ENCODE measurements at regions of chr19 and their contacts with region 1.

Region 1: GRCh38 chr19:44002566-44003460 is at the start of gene ZNF230:
- DNase-seq: peak; percentile 90
- H3K4me3 Mint-ChIP-seq: peak within 1 kb of the TSS; percentile 87
- H3K27ac Mint-ChIP-seq: peak within 1 kb of the TSS; percentile 77
- H3K4me1 Mint-ChIP-seq: peaks cover 8% of the 10 kb centered on the region
- H3K27me3 Mint-ChIP-seq: no peaks in the 10 kb centered on the region
- CTCF ChIP-seq: no peak
- total RNA-seq, gene ZNF230: 6.0 and 7.8 TPM in 2 replicates

Region 2: DNA sequence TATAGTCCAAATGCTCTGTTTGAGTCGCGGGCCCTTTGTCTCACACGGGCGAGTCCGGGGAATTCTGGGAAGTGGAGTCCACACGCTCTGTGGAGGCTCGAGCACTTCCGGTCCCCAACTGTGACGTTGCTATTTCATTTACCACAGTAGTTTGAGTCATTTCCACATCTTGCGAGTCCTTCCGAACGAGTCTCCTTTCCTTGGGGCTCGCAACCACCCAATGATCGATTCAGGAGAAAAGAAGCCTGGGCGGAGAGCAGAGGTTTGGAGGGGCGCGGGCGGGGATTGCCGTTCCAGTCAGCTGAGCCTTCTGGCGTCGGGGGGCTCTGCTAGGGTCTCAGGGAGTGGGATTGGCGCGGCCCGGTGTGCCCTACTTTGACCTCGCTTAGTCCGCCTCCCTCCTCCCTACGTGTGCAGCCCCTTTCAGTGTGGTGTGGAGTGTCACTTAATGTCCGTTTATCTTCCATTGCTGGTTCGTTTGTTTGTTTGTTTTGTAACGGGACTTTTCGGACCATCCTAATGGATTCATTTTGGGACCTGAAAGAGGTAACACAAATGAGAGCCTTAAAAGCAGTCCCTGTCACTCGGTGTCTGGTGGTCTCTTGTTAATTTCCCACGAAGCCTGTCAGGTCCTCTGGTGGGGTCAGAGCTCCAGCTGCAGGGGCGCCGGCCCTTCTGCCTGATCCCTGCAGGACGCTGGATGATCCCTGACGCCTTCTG is 22.6 kb after region 1 on chr19 and contains the start of gene ZNF222:
- CTCF ChIA-PET with region 1: no interaction called
- intact Hi-C with region 1: loop called (anchors 1 kb)
- DNase-seq: peak; percentile 77
- H3K4me3 Mint-ChIP-seq: peak within 1 kb of the TSS; percentile 93
- H3K27ac Mint-ChIP-seq: peak within 1 kb of the TSS; percentile 90
- H3K4me1 Mint-ChIP-seq: peaks cover 7% of the 10 kb centered on the region
- H3K27me3 Mint-ChIP-seq: peaks cover 12% of the 10 kb centered on the region
- CTCF ChIP-seq: no peak
- total RNA-seq, gene ZNF222: 5.3 and 6.5 TPM in 2 replicates

Measured in Calu3 (cell line).